ENCODE measurements at regions of chr12 and their contacts with region 1.

Region 1: GRCh38 chr12:103548622-103549601 is 38.2 kb upstream of the STAB2 start:
- DNase-seq: no peak
- H3K4me3 ChIP-seq: no peak overlapping the region
- H3K27me3 ChIP-seq: no peaks in the 10 kb centered on the region; the same call in 1 of the 2 replicates
- CTCF ChIP-seq: peak; percentile 87

Region 2: DNA sequence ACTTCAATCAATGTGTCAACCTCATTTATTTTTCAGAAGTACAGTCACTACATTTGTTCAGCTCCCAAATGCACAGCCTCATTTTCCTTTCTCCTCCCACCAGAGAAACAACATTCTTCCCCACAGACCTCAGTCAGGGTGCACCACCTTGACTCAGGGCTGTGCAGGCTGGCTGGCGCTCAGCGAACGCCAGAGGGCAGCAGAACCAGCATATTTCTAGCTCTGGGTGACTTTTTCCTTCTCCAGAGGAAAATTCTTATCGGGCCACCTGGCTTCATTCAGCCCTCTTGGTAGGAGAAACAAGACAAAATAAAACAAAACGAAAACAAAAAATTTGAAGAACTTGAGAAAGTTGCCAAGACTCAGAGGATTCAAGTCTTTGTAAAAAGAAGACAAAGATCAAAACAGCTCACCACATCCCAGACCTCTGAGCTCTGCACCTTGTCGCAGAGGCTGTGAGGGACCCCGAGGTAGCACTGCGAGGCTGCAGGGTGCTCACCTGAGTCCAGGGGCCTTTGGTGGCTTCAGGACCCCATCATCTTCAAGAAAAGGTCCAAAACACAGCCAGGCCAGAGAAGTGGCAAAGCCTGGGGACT is 665.6 kb before region 1 on chr12:
- CTCF ChIA-PET with region 1: interaction called, 69 read pairs
- POLR2A ChIA-PET with region 1: no interaction called
- DNase-seq: no peak
- H3K4me3 ChIP-seq: no peak overlapping the region
- H3K27me3 ChIP-seq: no peaks in the 10 kb centered on the region; the same call in 1 of the 2 replicates
- CTCF ChIP-seq: peak; percentile 92

Region 3: GRCh38 chr12:102903337-102904007 is 645.4 kb before region 1 on chr12:
- CTCF ChIA-PET with region 1: no interaction called
- POLR2A ChIA-PET with region 1: interaction called, 10 read pairs
- DNase-seq: no peak
- H3K4me3 ChIP-seq: no peak overlapping the region
- H3K27me3 ChIP-seq: no peaks in the 10 kb centered on the region
- CTCF ChIP-seq: no peak

Region 4: DNA sequence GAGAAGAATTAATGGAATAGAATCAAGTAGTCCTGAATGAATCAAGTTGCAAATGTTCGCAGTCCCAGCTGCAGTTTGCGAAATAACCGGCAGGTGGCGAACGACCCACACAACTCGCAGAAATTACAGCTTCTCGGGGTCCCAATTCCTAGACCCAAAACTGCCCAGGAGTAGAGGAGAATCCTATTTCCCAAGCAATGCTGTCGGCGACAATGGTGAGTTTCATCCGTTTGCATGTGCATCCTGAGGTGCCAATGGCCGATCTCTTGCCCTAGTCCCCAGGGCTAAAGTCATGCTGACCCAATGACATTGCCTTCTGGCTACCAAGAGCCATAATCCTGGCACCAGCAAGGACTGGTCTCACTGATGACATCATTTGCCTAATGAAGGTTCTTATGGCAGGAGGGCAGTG is 600.0 kb before region 1 on chr12:
- CTCF ChIA-PET with region 1: interaction called, 84 read pairs
- POLR2A ChIA-PET with region 1: no interaction called
- DNase-seq: no peak
- H3K4me3 ChIP-seq: no peak overlapping the region
- H3K27me3 ChIP-seq: peaks cover 10% of the 10 kb centered on the region
- CTCF ChIP-seq: peak; percentile 87

Region 5: GRCh38 chr12:103495479-103496456 is 53.1 kb before region 1 on chr12 and contains the start of gene C12orf42:
- CTCF ChIA-PET with region 1: interaction called, 23 read pairs
- POLR2A ChIA-PET with region 1: no interaction called
- DNase-seq: no peak
- H3K4me3 ChIP-seq: peak within 1 kb of the TSS; percentile 28
- H3K27me3 ChIP-seq: peaks cover 3% of the 10 kb centered on the region
- CTCF ChIP-seq: peak; percentile 47
- polyA plus RNA-seq, gene C12orf42: not detected in 2 replicates

Region 6: DNA sequence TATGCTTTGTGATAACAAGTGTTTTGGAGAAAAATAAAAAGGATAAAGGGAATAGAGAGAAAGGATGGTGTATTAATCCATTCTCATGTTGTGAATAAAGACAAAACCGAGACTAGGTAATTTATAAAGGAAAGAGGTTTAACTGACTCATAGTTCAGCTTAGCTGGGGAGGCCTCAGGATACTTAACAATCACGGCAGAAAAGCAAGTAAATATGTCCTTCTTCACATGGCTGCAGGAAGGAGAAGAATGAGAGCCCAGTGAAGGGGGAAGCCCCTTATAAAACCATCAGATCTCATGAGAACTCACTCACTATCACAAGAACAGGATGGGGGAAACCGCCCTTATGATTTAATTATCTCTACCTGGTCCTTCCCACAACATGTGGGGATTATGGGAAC is 35.0 kb before region 1 on chr12:
- CTCF ChIA-PET with region 1: no interaction called
- POLR2A ChIA-PET with region 1: no interaction called
- DNase-seq: no peak
- H3K4me3 ChIP-seq: no peak overlapping the region
- H3K27me3 ChIP-seq: no peaks in the 10 kb centered on the region
- CTCF ChIP-seq: no peak

Region 7: DNA sequence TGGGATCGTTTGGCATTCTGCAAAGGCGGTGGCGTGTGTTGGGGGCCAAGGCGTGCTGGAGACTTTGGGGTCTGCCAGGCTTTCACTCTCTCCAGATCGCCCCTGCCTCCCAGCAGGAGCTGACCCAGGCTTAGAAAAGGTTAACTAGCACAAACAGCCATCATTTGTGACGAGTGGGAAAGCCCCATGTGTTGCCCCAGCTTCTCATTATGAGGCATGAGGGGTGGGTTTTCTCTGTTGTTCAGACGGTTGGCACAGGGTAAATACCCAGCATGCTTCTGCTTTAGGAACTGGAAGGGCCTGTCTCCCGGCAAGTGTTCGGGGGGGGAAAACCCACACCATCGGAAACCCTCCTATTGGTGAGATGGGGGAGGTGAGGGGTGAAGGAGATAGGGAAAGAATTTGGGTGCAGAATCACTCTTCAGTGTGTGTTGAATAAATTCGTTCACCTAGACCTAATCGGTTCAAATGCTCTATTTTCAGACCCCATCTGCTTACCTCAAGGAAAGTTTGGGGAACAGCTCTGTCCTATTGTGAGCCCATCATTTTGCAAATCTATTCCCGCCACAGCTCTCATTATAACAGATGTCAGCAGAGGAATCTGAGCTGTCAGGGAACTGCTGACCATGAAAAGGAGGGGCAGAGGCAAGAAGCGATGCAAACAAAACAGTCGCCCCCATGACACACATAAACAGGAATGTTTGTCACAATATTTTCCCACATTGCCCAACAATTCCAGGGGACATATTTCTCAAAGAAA is 18.4 kb before region 1 on chr12:
- CTCF ChIA-PET with region 1: interaction called, 11 read pairs
- POLR2A ChIA-PET with region 1: no interaction called
- DNase-seq: no peak
- H3K4me3 ChIP-seq: no peak overlapping the region
- H3K27me3 ChIP-seq: no peaks in the 10 kb centered on the region; the same call in 1 of the 2 replicates
- CTCF ChIP-seq: no peak

Region 8: GRCh38 chr12:103560604-103561573 is 12.0 kb after region 1 on chr12:
- CTCF ChIA-PET with region 1: interaction called, 23 read pairs
- POLR2A ChIA-PET with region 1: no interaction called
- DNase-seq: peak; percentile 92
- H3K4me3 ChIP-seq: no peak overlapping the region
- H3K27me3 ChIP-seq: no peaks in the 10 kb centered on the region
- CTCF ChIP-seq: no peak

Region 9: DNA sequence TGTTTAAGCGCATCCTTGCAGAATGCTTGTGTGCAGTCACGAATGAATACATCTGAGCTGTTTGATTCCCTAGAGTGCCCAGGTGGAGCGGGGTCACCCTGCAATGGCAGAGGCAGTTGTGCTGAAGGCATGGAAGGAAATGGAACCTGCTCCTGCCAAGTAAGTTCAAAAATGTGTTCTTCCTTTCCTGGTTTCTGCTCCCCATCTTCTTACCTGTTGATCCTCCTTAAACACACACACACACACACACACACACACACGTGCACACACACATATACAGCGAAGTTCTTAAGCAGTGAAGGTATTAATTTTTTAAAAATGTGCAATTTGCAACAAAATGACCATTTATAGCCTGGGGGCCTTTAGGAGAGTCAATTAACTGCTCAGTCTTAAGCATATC is 71.5 kb after region 1 on chr12:
- CTCF ChIA-PET with region 1: no interaction called
- POLR2A ChIA-PET with region 1: no interaction called
- DNase-seq: no peak
- H3K4me3 ChIP-seq: no peak overlapping the region
- H3K27me3 ChIP-seq: no peaks in the 10 kb centered on the region
- CTCF ChIP-seq: no peak

Region 10: DNA sequence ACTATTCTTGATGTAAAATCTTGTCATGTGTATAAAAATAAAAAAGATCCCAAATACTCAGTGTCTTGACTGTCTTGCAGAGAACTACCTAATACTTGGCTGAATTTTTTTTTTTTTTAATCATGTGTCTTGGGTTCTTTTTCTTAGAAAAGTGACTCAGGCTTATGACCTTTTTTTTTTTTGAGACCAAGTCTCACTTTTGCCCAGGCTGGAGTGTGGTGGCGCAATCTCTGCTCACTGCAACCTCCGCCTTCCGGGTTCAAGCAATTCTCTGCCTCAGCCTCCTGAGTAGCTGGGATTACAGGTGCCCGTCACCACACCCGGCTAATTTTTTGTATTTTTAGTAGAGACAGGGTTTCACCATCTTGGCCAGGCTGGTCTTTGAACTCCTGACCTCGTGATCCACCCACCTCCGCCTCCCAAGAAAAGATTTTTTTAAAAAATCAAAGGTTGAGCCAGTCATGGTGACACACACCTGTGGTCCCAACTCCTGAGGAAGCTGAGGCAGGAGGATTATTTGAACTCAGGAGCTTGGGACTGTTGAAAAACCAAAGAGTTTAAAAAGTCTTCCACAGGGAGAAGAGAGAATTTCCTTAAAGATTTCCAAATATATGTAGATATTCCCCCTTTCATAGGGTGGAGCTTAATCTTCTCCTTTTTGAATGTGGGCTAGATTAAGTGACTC is 399.1 kb after region 1 on chr12:
- CTCF ChIA-PET with region 1: no interaction called
- POLR2A ChIA-PET with region 1: no interaction called
- DNase-seq: no peak
- H3K4me3 ChIP-seq: no peak overlapping the region
- H3K27me3 ChIP-seq: no peaks in the 10 kb centered on the region
- CTCF ChIP-seq: no peak